Endothelial cell of umbilical vein (primary cell): ENCODE measurements at regions of chr6 and their contacts with region 1.

Region 1: GRCh38 chr6:37207903-37208456 is 38.0 kb downstream of the PIM1 start:
- DNase-seq: peak; percentile 83
- H3K4me3 ChIP-seq: no peak overlapping the region
- H3K27ac ChIP-seq: no peak overlapping the region
- H3K4me1 ChIP-seq: peaks cover 3% of the 10 kb centered on the region
- H3K27me3 ChIP-seq: peaks cover 20 to 25% of the 10 kb centered on the region in 2 experiments
- CTCF ChIP-seq: peak; percentile 72 to 84
- POLR2A ChIP-seq: no peak

Region 2: DNA sequence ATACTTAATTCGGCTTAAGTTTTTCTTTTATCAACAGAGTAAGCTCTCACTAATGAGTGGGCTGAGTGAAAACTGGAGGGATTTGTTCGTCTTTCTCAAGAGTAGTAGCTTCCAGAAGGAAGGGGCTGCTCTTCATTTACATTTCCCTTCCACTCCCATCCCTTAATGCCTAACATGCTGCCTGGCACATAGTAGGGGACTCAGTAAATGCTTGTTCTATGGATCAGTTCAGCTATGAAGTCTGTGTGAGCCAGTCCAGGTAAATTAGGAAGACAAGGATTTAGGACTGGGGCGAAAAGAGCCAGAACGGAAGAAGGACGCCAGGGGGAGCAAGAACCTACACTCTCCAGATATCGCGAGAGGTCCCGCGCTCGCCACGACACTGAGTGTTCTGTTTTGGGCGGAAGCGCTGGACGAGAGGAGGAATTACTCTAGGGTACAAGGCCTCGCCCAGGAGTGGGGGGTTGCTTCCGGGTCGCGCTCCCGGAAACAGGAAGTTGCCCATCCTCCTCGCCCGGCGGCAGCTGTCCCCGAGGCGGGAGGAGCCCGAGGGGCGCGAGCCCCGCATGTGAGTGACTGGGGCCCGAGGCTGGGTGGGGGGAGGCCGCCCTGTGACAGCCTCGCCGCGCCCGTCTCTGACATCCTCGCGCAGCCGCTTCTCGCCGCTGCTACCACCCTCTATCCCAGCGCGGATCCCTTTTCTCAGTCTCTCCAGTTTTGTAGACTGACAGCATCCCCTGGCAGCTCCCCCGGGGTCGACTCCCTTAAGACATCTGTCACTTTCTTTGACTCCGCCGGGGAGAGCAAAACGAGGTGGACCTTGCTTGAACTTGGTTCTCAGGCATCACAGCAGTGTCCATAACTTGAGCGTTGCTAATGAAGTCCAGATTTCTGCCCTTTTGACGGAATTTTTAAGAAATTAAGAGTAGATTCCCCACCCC is 322.2 kb before region 1 on chr6 and contains the start of gene C6orf89:
- CTCF ChIA-PET with region 1: interaction called, 5 read pairs
- POLR2A ChIA-PET with region 1: no interaction called
- dilution Hi-C with region 1: no loop called
- intact Hi-C with region 1: loop called (anchors 1 kb)
- DNase-seq: peak; percentile 96
- H3K4me3 ChIP-seq: peak within 1 kb of the TSS; percentile 77 to 95 (median 84)
- H3K27ac ChIP-seq: peak within 1 kb of the TSS; percentile 76
- H3K4me1 ChIP-seq: peaks cover 12% of the 10 kb centered on the region
- H3K27me3 ChIP-seq: no peaks in the 10 kb centered on the region
- CTCF ChIP-seq: peak; percentile 78 to 84
- POLR2A ChIP-seq: peak; percentile 89
- total RNA-seq, gene C6orf89: 34.0 and 36.4 TPM in 2 replicates

Region 3: DNA sequence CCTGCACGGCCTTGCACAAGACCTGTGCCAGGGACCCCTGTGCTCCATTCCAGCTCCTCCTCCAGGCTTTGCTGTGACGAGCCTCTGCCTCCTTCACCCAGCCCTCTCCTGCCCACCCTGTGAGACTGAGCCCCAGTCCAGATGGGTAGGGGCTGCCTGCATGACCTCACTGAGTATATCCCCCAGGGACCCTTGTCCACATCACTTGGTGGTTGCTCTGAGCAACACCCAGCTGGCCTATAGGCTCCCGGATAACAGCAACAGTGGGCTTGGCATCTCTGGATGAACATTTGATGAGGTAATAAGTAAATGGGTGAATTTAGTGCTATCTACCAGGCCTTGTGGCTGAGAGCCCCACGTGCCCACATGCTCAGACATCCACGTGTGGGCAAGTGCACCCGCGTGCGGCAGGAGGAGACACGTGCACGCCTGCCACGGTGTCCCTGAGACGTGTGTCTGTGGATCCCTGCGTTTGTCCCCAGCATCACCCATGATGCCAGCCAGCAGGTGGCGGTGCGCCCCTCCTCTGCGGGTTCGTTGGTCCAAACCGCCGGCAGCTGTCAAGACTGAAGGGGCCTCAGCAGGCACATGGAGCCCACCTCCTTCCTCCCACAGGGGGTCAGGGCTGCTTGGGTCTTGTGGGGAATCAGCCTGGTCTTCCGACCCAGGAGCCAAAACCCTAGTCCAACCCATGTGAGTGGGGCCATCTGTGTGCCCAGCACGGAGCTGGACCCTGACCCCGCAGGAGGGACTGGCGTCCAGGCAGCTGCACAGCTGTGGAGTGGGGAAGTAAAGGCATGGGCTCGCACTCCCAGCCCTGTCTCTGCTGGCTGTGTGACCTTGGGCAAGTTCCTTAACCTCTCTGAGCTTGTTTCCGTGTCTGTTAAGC is 156.6 kb before region 1 on chr6:
- CTCF ChIA-PET with region 1: interaction called, 66 read pairs
- POLR2A ChIA-PET with region 1: no interaction called
- dilution Hi-C with region 1: no loop called
- intact Hi-C with region 1: loop called (anchors 1 kb)
- DNase-seq: peak; percentile 79
- H3K4me3 ChIP-seq: no peak overlapping the region
- H3K27ac ChIP-seq: no peak overlapping the region
- H3K4me1 ChIP-seq: no peaks in the 10 kb centered on the region
- H3K27me3 ChIP-seq: peaks cover 0 to 4% of the 10 kb centered on the region in 2 experiments
- CTCF ChIP-seq: peak; percentile 81 to 93
- POLR2A ChIP-seq: no peak

Region 4: GRCh38 chr6:37192666-37193065 is 15.3 kb before region 1 on chr6:
- CTCF ChIA-PET with region 1: interaction called, 11 read pairs
- POLR2A ChIA-PET with region 1: no interaction called
- dilution Hi-C with region 1: no loop called
- intact Hi-C with region 1: no loop called
- DNase-seq: no peak
- H3K4me3 ChIP-seq: no peak overlapping the region
- H3K27ac ChIP-seq: no peak overlapping the region
- H3K4me1 ChIP-seq: no peaks in the 10 kb centered on the region
- H3K27me3 ChIP-seq: peaks cover 0 to 4% of the 10 kb centered on the region in 2 experiments
- CTCF ChIP-seq: no peak
- POLR2A ChIP-seq: no peak

Region 5: DNA sequence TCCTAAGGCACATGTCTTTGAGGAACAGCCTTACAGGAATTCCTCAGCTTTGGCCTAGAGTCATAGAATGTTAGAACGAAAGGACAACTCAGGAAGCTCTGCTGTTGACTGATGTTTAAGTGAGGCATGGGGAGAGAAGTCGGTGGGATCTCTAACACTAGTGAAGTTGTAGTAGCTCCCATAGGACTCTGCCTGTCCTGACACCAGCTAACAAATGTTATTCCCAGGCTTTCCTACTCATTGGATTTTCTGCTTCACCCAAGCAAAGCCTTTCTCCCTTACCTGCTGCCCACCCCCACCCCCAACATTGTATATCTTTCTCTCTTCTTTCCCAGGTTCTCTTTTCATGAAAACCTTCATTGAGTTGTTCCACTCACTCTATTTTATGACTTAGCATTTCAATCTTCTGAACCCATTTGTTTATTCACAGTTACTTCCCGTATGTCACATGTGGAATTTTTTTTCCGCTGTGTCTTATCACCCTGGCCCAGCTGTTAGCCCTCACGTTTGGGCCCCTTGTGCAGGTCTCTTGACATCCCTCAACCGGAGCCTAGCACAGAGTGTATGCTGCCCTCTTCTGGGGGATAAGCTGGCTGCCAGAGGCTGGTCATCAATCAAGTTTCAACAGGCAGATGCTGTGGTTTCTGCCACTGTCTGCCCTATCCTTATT is 106.6 kb after region 1 on chr6:
- CTCF ChIA-PET with region 1: interaction called, 24 read pairs
- POLR2A ChIA-PET with region 1: no interaction called
- dilution Hi-C with region 1: no loop called
- intact Hi-C with region 1: no loop called
- DNase-seq: peak; percentile 93
- H3K4me3 ChIP-seq: no peak overlapping the region
- H3K27ac ChIP-seq: peak overlapping the region; percentile 34
- H3K4me1 ChIP-seq: no peaks in the 10 kb centered on the region
- H3K27me3 ChIP-seq: no peaks in the 10 kb centered on the region
- CTCF ChIP-seq: peak; percentile 64 to 78
- POLR2A ChIP-seq: no peak